H1 (cell line): ENCODE measurements at regions of chr2 and their contacts with region 1.

Region 1: GRCh38 chr2:54704688-54705605 is 18.5 kb upstream of the EML6 start:
- DNase-seq: no peak
- H3K4me3 ChIP-seq: no peak overlapping the region
- H3K27ac ChIP-seq: no peak overlapping the region
- H3K4me1 ChIP-seq: peaks cover 0 to 8% (median under 1%) of the 10 kb centered on the region in 4 experiments; a peak in 4 of 7 replicates
- H3K27me3 ChIP-seq: peaks cover 0 to 9% (median 5%) of the 10 kb centered on the region in 4 experiments; a peak in 4 of 7 replicates
- CTCF ChIP-seq: peak in 2 of 3 experiments; percentile 34 to 39; a peak in 2 of 4 replicates
- EP300 ChIP-seq: no peak
- POLR2A ChIP-seq: no peak
- RAD21 ChIP-seq: peak; percentile 64 to 72

Region 2: GRCh38 chr2:54176577-54176976 is 528.4 kb before region 1 on chr2:
- CTCF ChIA-PET with region 1: interaction called, 12 read pairs
- POLR2A ChIA-PET with region 1: no interaction called
- DNase-seq: peak; percentile 10 to 63
- H3K4me3 ChIP-seq: no peak overlapping the region
- H3K27ac ChIP-seq: no peak overlapping the region
- H3K4me1 ChIP-seq: no peaks in the 10 kb centered on the region
- H3K27me3 ChIP-seq: no peaks in the 10 kb centered on the region
- CTCF ChIP-seq: peak; percentile 46 to 79 (median 70)
- EP300 ChIP-seq: no peak
- POLR2A ChIP-seq: no peak
- RAD21 ChIP-seq: peak; percentile 87 to 94

Region 3: DNA sequence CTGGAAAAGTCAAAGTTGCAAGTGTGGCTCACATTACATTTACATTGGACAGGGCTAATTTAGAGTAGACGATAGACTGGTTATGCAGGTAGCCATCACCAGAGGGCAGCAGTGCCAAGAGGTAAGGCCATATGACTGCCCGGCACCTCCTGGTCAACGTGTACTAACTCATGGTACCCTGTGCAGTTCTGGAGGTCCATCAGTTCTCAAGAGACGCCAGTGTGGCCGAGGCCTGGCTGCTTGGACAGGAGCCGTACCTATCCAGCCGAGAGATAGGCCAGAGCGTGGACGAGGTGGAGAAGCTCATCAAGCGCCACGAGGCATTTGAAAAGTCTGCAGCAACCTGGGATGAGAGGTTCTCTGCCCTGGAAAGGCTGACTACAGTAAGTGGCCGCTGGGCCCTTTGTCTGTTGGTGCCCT is 47.3 kb before region 1 on chr2:
- CTCF ChIA-PET with region 1: interaction called, 179 read pairs
- POLR2A ChIA-PET with region 1: no interaction called
- DNase-seq: peak in 1 of 2 experiments; percentile 65
- H3K4me3 ChIP-seq: no peak overlapping the region
- H3K27ac ChIP-seq: no peak overlapping the region
- H3K4me1 ChIP-seq: no peaks in the 10 kb centered on the region
- H3K27me3 ChIP-seq: no peaks in the 10 kb centered on the region
- CTCF ChIP-seq: peak; percentile 50 to 73 (median 57)
- EP300 ChIP-seq: no peak
- POLR2A ChIP-seq: no peak
- RAD21 ChIP-seq: peak; percentile 57 to 61

Region 4: GRCh38 chr2:54673501-54673998 is 31.4 kb before region 1 on chr2:
- CTCF ChIA-PET with region 1: interaction called, 179 read pairs
- POLR2A ChIA-PET with region 1: interaction called, 5 read pairs
- DNase-seq: peak in 1 of 2 experiments; percentile 45
- H3K4me3 ChIP-seq: no peak overlapping the region
- H3K27ac ChIP-seq: no peak overlapping the region
- H3K4me1 ChIP-seq: peaks cover 0 to 3% (median 0%) of the 10 kb centered on the region in 4 experiments; a peak in 3 of 7 replicates
- H3K27me3 ChIP-seq: no peaks in the 10 kb centered on the region
- CTCF ChIP-seq: no peak
- EP300 ChIP-seq: no peak
- POLR2A ChIP-seq: no peak
- RAD21 ChIP-seq: no peak

Region 5: GRCh38 chr2:54691445-54692135 is 13.4 kb before region 1 on chr2:
- CTCF ChIA-PET with region 1: interaction called, 71 read pairs
- POLR2A ChIA-PET with region 1: no interaction called
- DNase-seq: no peak
- H3K4me3 ChIP-seq: no peak overlapping the region
- H3K27ac ChIP-seq: no peak overlapping the region
- H3K4me1 ChIP-seq: no peaks in the 10 kb centered on the region
- H3K27me3 ChIP-seq: no peaks in the 10 kb centered on the region
- CTCF ChIP-seq: no peak
- EP300 ChIP-seq: no peak
- POLR2A ChIP-seq: no peak
- RAD21 ChIP-seq: peak; percentile 31 to 50; a peak in 3 of 4 replicates